ENCODE measurements at regions of chr12 and their contacts with region 1.

Region 1: DNA sequence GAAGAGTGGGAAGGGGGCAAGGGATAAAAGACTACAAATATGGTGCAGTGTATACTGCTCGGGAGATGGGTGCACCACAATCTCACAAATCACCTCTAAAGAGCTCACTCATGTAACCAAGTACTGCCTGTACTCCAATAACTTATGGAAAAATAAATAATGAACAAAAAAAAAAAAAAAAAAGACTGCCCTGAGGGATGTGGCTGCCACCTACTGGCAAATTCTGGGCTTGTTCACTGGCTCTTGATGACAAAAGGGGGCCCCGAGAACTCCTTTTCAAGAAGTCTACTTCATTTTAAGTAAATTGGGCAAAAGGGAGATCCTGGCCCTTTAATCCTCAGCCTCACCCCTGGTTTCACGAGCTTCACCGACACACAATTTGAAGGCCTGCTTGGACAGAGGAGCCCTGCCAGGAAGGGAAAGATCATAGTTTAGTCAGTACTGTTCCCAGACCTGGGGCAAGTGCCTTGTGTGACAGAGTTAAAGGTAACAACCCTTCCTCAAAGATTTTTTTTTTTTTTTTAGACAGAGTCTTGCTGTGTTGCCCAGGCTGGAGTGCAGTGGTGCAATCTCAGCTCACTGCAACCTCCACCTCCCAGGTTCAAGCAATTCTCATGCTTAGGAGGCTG is 26.1 kb upstream of the STAC3 start:
- DNase-seq: peak in 1 of 2 experiments; percentile 55
- H3K4me3 ChIP-seq: no peak overlapping the region
- H3K4me3 Mint-ChIP-seq: no peak overlapping the region
- H3K27ac Mint-ChIP-seq: no peak overlapping the region
- H3K4me1 ChIP-seq: peaks cover 13% of the 10 kb centered on the region
- H3K4me1 Mint-ChIP-seq: peaks cover 11% of the 10 kb centered on the region
- H3K27me3 ChIP-seq: no peaks in the 10 kb centered on the region
- H3K27me3 Mint-ChIP-seq: no peaks in the 10 kb centered on the region
- CTCF ChIP-seq: peak; percentile 25 to 59

Region 2: DNA sequence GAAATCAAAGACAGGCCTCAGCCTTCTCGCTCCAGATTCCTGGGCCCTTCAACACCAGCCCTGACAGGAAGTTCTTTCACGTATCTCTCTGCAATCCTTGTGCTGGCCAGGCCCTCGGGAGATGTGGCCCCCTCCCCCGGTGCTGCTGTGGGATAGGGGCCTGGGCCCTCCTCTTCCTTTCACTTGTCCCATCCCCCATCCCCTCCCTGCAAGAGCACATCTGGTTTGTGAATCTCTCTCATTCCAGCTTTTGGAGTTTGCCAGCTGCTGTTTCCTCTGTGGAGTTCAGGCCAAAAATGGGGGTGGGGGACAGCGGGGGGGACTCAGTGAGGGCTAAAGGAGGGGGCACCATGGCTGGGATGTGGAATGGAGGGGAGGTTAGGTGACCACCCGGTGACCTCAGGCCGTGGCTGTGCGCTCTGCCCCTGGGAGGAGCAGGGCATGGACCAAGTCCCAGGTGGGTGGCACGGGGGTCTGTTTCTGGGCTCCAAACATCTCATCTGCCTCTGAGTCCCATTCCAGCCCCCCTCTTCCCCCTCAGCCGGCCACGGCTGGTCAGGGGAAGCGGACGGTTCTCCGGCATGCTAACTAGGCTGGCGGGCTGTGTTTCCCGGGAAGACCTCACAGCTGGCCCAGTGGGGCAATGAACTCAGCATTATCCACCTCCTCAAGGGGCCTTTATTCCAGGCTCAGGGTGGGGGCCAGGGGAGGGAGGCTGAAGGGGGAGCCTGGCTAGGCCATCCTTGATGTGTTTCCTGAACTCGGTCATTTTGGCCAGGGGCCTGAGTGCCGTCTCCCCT is 141.3 kb before region 1 on chr12:
- CTCF ChIA-PET with region 1: no interaction called
- POLR2A ChIA-PET with region 1: no interaction called
- intact Hi-C with region 1: no loop called
- DNase-seq: no peak
- H3K4me3 ChIP-seq: no peak overlapping the region
- H3K4me3 Mint-ChIP-seq: no peak overlapping the region
- H3K27ac Mint-ChIP-seq: no peak overlapping the region
- H3K4me1 ChIP-seq: peaks cover 52% of the 10 kb centered on the region
- H3K4me1 Mint-ChIP-seq: peaks cover 60% of the 10 kb centered on the region
- H3K27me3 ChIP-seq: no peaks in the 10 kb centered on the region
- H3K27me3 Mint-ChIP-seq: no peaks in the 10 kb centered on the region
- CTCF ChIP-seq: no peak

Region 3: GRCh38 chr12:57248934-57249742 is 27.9 kb before region 1 on chr12:
- CTCF ChIA-PET with region 1: no interaction called
- POLR2A ChIA-PET with region 1: no interaction called
- intact Hi-C with region 1: loop called (anchors 1 kb)
- DNase-seq: no peak
- H3K4me3 ChIP-seq: no peak overlapping the region
- H3K4me3 Mint-ChIP-seq: no peak overlapping the region
- H3K27ac Mint-ChIP-seq: no peak overlapping the region
- H3K4me1 ChIP-seq: no peaks in the 10 kb centered on the region
- H3K4me1 Mint-ChIP-seq: no peaks in the 10 kb centered on the region
- H3K27me3 ChIP-seq: peaks cover 2% of the 10 kb centered on the region; the same call in 1 of the 2 replicates
- H3K27me3 Mint-ChIP-seq: peaks cover 2% of the 10 kb centered on the region
- CTCF ChIP-seq: no peak

Region 4: GRCh38 chr12:57263096-57263495 is 14.0 kb before region 1 on chr12:
- CTCF ChIA-PET with region 1: no interaction called
- POLR2A ChIA-PET with region 1: no interaction called
- intact Hi-C with region 1: loop called (anchors 1 kb)
- DNase-seq: no peak
- H3K4me3 ChIP-seq: no peak overlapping the region
- H3K4me3 Mint-ChIP-seq: no peak overlapping the region
- H3K27ac Mint-ChIP-seq: no peak overlapping the region
- H3K4me1 ChIP-seq: no peaks in the 10 kb centered on the region
- H3K4me1 Mint-ChIP-seq: no peaks in the 10 kb centered on the region
- H3K27me3 ChIP-seq: no peaks in the 10 kb centered on the region
- H3K27me3 Mint-ChIP-seq: no peaks in the 10 kb centered on the region
- CTCF ChIP-seq: no peak

Measured in Caco-2 (cell line).